ENCODE measurements at regions of chr19 and their contacts with region 1.

Region 1: GRCh38 chr19:4873930-4874329 is 6.5 kb upstream of the PLIN3 start:
- DNase-seq: no peak
- H3K4me3 Mint-ChIP-seq: no peak overlapping the region
- H3K27ac Mint-ChIP-seq: no peak overlapping the region
- H3K4me1 Mint-ChIP-seq: peaks cover 12% of the 10 kb centered on the region
- H3K27me3 Mint-ChIP-seq: peaks cover 12% of the 10 kb centered on the region

Region 2: GRCh38 chr19:4821265-4821664 is 52.7 kb before region 1 on chr19:
- CTCF ChIA-PET with region 1: no interaction called
- POLR2A ChIA-PET with region 1: no interaction called
- DNase-seq: no peak
- H3K4me3 Mint-ChIP-seq: no peak overlapping the region
- H3K27ac Mint-ChIP-seq: peak overlapping the region; percentile 20
- H3K4me1 Mint-ChIP-seq: peaks cover 7% of the 10 kb centered on the region
- H3K27me3 Mint-ChIP-seq: no peaks in the 10 kb centered on the region

Region 3: DNA sequence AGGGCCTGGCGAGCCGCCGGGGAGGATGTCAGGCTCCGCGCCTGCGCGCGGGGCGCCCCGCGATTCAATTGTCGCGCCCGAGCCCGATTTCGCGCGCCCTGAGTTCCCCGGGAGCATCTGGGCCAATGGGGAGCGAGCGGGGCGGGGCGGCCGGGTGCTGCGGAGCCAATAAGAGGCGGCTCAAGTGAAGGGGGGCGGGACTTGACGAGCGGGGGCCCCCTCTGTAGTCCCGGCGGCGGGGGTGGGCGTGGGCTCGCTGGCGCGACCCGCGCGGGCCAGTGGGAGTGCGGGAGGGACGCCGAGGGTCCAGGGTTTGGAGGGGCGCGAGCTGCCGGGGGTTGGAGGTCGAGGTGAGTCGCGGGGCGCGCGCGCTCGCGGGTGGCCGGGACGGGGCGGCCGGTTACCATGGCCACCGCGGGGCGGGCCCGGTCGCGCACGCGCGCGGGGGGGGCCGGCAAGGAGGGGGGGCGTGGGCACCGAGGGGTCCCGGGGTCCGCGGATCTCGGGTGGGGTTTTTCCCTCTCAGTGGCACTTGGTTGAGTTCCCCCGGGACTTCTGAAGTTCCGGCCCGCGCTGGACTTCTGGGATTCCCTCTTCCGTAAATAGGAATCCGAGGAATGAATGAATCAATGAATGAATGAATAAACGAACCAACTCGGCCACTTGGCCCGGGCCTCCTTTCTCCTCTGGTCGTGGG is 36.1 kb after region 1 on chr19:
- CTCF ChIA-PET with region 1: interaction called, 27 read pairs
- POLR2A ChIA-PET with region 1: interaction called, 3 read pairs
- DNase-seq: peak; percentile 96
- H3K4me3 Mint-ChIP-seq: peak overlapping the region; percentile 81
- H3K27ac Mint-ChIP-seq: peak overlapping the region; percentile 89
- H3K4me1 Mint-ChIP-seq: peaks cover 53% of the 10 kb centered on the region
- H3K27me3 Mint-ChIP-seq: no peaks in the 10 kb centered on the region

Region 4: GRCh38 chr19:4957981-4958380 is 84.1 kb after region 1 on chr19:
- CTCF ChIA-PET with region 1: no interaction called
- POLR2A ChIA-PET with region 1: interaction called, 11 read pairs
- DNase-seq: no peak
- H3K4me3 Mint-ChIP-seq: no peak overlapping the region
- H3K27ac Mint-ChIP-seq: no peak overlapping the region
- H3K4me1 Mint-ChIP-seq: no peaks in the 10 kb centered on the region
- H3K27me3 Mint-ChIP-seq: no peaks in the 10 kb centered on the region